Endothelial cell of umbilical vein (primary cell): ENCODE measurements at regions of chr3 and their contacts with region 1.

Region 1: GRCh38 chr3:149628957-149629670 is 28.7 kb downstream of the WWTR1 start:
- DNase-seq: no peak
- H3K4me3 ChIP-seq: no peak overlapping the region
- H3K27ac ChIP-seq: no peak overlapping the region
- H3K4me1 ChIP-seq: peaks cover 63% of the 10 kb centered on the region
- H3K27me3 ChIP-seq: no peaks in the 10 kb centered on the region
- CTCF ChIP-seq: no peak
- POLR2A ChIP-seq: no peak

Region 2: GRCh38 chr3:149648525-149648924 is 19.4 kb after region 1 on chr3:
- CTCF ChIA-PET with region 1: interaction called, 13 read pairs
- POLR2A ChIA-PET with region 1: interaction called, 4 read pairs
- dilution Hi-C with region 1: no loop called
- intact Hi-C with region 1: no loop called
- DNase-seq: peak; percentile 80
- H3K4me3 ChIP-seq: peak overlapping the region in 1 of 3 experiments; percentile 13
- H3K27ac ChIP-seq: peak overlapping the region; percentile 37
- H3K4me1 ChIP-seq: peaks cover 88% of the 10 kb centered on the region
- H3K27me3 ChIP-seq: no peaks in the 10 kb centered on the region
- CTCF ChIP-seq: no peak
- POLR2A ChIP-seq: peak; percentile 68